ENCODE measurements at regions of chr17 and their contacts with region 1.

Region 1: DNA sequence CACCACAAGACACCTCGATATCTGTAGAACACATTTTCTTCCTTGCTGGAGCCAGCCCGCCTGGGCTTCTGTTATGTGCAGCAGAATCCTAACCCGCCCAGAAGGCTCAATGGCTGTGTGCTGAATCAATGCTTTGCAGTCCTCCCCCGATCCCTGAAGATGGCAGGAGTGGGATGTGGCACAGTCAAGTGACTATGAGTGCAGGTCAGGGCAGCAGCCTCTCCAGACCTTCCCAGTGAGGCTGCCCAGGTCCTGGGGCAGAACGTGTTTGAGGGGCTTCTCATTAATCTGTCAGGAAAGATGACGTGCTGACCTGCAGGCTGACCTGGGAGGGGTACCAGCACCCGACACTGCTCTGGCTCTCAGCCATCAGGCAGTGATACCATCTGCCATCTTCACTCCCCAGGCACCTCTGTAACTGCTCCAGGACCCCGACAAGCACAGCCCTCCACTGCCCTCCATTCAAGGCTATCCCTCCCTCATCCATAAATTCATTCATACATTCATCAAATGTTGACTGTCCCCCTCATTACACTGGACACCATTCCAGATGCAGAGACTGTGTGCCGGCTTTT is 35.2 kb downstream of the LRRC75A start:
- DNase-seq: peak; percentile 74
- H3K4me3 ChIP-seq: no peak overlapping the region
- H3K27ac ChIP-seq: no peak overlapping the region
- H3K4me1 ChIP-seq: peaks cover 5% of the 10 kb centered on the region
- H3K27me3 ChIP-seq: no peaks in the 10 kb centered on the region
- CTCF ChIP-seq: no peak
- POLR2A ChIP-seq: no peak

Region 2: DNA sequence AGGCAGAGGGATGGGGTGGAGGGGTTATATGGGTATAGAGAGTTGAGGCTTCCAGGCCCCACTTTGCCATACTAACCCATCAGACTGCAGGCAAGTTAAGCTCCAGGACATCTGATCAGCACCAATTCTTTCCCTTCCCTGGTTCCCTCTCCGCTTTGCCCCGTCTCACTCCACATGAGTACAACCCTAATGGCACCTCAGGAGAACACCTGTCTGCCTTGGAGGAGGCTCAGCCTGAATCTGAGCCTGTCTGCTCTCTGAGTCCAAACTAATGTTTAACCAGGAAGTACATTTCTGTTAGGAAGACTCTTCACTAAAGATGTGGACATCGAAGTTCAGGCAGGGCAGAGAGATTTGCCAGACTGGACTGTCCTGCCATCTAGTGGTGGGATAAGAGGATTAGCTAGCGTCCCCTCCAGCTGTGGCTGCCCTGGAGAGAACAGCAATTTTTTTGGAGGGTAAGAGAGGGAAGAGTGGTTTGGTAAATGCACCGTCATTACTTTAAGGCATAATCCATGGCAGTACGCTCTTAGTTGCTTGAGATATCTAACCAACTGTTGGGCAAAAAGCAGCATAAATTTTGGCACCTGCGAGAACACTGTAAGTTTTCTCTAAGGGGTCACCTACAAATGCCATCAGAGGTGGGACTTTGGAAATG is 64.4 kb after region 1 on chr17:
- intact Hi-C with region 1: loop called (anchors 5 kb)
- DNase-seq: peak; percentile 80
- H3K4me3 ChIP-seq: no peak overlapping the region
- H3K27ac ChIP-seq: no peak overlapping the region
- H3K4me1 ChIP-seq: peaks cover 2% of the 10 kb centered on the region
- H3K27me3 ChIP-seq: no peaks in the 10 kb centered on the region
- CTCF ChIP-seq: peak; percentile 84 to 88 (median 87)
- POLR2A ChIP-seq: no peak

Measured in testis (tissue), 5 donors.